ENCODE measurements at regions of chr1 and their contacts with region 1.

Region 1: DNA sequence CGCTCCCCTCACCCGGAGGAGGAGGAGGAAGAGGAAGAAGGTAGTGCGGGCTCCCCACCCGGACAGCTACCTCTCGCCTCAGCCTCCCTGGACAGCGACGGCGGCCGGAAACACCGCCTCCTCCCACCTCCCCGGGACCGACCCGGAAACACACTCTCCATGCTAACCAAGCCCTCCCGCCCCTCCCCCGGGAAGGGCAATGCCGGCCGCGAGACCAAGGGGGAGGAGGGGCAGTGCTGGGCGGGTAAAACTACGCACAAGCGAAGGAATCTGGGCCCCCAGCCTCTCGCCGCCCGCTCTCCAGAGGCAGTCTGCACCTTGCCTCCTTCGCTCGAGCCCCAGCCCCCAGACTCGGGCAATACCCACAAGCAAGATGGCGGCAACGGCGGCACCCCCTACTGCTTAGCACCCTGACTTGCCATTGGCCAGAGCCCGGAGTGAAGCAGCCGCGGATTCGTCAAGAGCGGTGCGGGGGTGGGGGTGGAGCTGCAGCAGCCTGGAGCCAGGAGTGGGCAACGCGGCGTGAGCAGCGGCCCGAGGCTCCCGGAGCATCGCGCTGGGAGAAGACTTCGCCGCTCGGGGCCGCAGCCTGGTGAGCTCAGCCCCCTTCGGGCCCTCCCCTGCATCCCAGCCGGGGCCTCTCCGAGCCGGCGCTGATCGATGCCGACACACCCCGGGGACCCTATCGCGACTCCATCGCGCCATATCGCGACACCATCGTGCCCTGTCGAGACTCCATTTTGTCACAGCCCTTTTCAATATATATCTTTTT is at the starts of genes KIAA0319L and NCDN:
- DNase-seq: peak; percentile 99
- ATAC-seq: peak; percentile 92
- H3K4me3 Mint-ChIP-seq: peak within 1 kb of the TSS; percentile 98
- H3K27ac Mint-ChIP-seq: peak within 1 kb of the TSS; percentile 97
- H3K4me1 Mint-ChIP-seq: peaks cover 45% of the 10 kb centered on the region
- H3K27me3 Mint-ChIP-seq: no peaks in the 10 kb centered on the region
- total RNA-seq, gene KIAA0319L: 26.5 to 28.1 TPM
- total RNA-seq, gene NCDN: 21.1 to 23.4 TPM

Region 2: DNA sequence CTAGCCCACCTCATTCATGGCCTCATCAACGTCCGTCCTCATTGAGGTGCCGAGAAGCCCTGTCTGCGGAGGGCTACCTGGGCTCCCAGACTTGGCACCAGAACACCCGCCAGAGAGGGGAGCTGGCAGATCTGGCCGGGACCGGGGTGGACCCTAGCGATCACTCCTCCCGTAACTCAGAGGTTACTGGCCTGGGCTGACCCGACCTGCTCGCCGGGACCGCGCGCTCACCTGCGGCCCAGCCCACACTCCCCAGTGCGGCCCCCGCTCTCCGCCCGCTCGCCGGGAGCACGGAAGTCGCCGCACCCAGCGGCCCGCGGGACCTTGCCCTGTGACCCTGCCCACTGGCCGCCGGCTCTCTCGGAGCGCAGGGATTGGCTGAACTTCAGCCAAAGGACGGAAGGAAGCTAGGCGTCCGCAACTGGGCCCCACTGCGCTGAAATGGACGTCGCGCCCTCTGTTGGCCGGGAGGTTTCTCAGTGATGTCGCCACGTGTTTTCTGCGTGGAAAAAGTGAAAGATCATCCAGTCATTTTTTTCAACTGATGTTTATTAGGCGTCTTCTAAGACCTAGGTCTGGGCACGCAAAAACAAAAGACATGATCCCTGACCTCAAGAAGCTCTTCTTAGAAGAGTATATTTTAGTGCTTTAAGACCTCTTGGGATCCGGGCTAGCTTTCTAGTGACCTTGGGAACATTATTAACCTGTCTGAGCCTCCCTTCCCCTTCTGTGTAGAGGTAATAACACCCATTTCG is 697.9 kb before region 1 on chr1 and contains the start of gene SMIM12:
- CTCF ChIA-PET with region 1: interaction called, 3 read pairs
- POLR2A ChIA-PET with region 1: no interaction called
- intact Hi-C with region 1: loop called in 1 of 2 experiments (anchors 1 kb)
- DNase-seq: peak; percentile 95
- ATAC-seq: peak; percentile 95
- H3K4me3 Mint-ChIP-seq: peak within 1 kb of the TSS; percentile 98
- H3K27ac Mint-ChIP-seq: peak within 1 kb of the TSS; percentile 99
- H3K4me1 Mint-ChIP-seq: peaks cover 51% of the 10 kb centered on the region
- H3K27me3 Mint-ChIP-seq: no peaks in the 10 kb centered on the region
- total RNA-seq, gene SMIM12: 42.4 to 45.0 TPM

Region 3: DNA sequence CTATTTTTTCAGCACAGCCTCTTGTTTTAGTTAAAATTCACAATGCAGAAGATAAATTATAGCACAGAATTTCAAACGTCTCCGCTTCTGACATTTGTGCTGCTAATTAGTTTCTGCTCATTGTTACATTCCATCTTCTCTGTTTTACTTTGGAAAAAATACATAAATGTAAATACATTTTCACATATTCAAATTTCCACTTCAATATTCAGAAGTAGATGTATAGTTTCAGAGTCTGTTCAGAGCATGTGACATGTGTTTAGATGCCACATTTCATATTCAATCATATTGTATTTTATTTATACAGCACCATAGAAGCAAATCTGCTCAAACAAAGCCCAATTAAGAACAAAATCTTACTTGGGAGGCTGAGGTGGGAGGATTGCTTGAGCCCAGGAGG is 591.9 kb before region 1 on chr1:
- CTCF ChIA-PET with region 1: no interaction called
- POLR2A ChIA-PET with region 1: no interaction called
- intact Hi-C with region 1: no loop called
- DNase-seq: no peak
- ATAC-seq: no peak
- H3K4me3 Mint-ChIP-seq: no peak overlapping the region
- H3K27ac Mint-ChIP-seq: no peak overlapping the region
- H3K4me1 Mint-ChIP-seq: peaks cover 3% of the 10 kb centered on the region
- H3K27me3 Mint-ChIP-seq: no peaks in the 10 kb centered on the region

Region 4: GRCh38 chr1:35079003-35079930 is 478.2 kb before region 1 on chr1 and contains the start of gene ZMYM1:
- CTCF ChIA-PET with region 1: no interaction called
- POLR2A ChIA-PET with region 1: no interaction called
- intact Hi-C with region 1: loop called in 1 of 2 experiments (anchors 1 kb)
- DNase-seq: peak; percentile 95
- ATAC-seq: peak; percentile 97
- H3K4me3 Mint-ChIP-seq: peak within 1 kb of the TSS; percentile 88
- H3K27ac Mint-ChIP-seq: peak within 1 kb of the TSS; percentile 97
- H3K4me1 Mint-ChIP-seq: peaks cover 36% of the 10 kb centered on the region
- H3K27me3 Mint-ChIP-seq: peaks cover 5% of the 10 kb centered on the region
- total RNA-seq, gene ZMYM1: 3.3 to 5.7 TPM

Region 5: DNA sequence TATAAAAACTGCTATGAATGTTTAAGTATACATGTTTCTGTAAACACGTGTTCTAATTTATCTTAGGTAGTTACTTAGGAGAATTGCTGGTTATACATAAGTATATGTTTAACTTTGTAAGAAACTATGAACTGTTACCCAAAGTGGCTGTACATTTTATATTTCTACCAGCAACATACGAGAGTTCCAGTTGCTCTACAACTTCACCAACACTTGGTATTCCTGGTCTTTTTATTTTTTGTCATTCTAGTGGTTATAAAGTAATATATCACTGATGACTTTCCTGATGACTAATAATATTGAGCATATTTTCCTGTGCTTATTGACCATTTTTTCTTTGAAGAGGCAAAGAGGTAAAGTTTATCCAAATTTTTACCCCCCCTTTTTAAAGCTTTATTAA is 76.2 kb before region 1 on chr1:
- CTCF ChIA-PET with region 1: no interaction called
- POLR2A ChIA-PET with region 1: no interaction called
- intact Hi-C with region 1: no loop called
- DNase-seq: no peak
- ATAC-seq: no peak
- H3K4me3 Mint-ChIP-seq: no peak overlapping the region
- H3K27ac Mint-ChIP-seq: no peak overlapping the region
- H3K4me1 Mint-ChIP-seq: no peaks in the 10 kb centered on the region
- H3K27me3 Mint-ChIP-seq: no peaks in the 10 kb centered on the region

Region 6: DNA sequence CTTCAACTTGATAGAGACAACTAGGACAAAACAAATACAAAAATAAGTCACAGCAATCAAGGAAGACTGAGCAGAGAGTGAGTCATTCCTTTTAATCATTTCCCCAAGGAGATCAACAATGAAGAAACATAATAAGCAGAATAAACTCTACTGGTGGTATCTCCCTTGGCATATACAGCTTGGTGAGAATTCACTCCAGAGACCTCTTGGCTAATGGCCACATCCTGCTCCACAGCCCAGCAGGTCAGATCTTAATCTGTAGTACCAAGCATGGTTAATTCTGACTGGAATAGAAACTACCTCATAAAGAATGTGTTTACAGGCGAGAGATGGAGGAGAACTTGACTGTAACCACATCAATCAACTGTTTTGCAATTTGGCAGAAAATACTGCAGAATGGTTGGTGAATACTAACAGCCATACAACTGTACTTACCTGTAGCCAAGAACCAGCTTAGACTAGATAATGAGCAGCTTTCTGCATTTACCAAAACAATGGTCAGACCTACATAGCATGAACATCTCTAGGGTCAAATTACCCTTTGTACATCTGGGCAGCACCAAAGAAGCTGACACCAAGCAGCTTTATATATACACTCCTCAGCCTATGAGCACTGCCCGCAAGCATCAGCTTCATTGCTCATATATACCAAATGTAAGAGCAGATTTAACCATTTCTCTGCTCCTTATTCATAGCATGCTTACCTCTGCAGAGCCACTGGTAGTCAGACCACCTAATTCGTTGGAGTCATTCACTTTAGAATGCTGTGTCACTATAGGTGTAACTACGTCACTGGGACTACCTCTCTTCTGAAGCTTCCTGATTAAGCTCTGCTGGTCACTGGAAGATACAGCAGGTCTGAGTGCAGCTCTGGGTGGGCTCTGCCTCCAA is 51.3 kb before region 1 on chr1:
- CTCF ChIA-PET with region 1: interaction called, 3 read pairs
- POLR2A ChIA-PET with region 1: interaction called, 5 read pairs
- intact Hi-C with region 1: loop called (anchors 1 to 5 kb)
- DNase-seq: peak; percentile 62
- ATAC-seq: peak; percentile 80
- H3K4me3 Mint-ChIP-seq: peak overlapping the region; percentile 26
- H3K27ac Mint-ChIP-seq: peak overlapping the region; percentile 81
- H3K4me1 Mint-ChIP-seq: peaks cover 61% of the 10 kb centered on the region
- H3K27me3 Mint-ChIP-seq: no peaks in the 10 kb centered on the region

Region 7: DNA sequence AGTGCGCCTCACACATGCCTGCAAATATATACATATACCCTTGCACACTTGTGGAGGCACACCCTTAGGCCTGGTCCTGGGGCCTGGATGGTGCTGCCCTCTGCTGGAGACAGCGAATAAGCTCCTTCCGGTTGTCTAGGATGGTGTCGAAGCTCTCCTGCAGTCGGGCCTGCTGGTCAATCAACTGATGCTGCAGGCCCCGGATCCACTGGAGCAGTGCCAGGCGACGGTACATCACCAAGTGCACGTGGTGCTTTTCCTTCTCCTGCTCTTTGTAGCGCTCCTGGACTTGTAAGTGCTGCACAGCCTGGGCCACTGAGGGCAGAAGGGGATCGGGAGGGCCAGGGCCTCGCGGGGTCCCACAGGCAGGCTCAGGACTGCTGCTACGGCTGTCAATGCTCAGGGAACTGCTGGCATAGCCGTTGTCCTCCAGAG is 158.1 kb after region 1 on chr1:
- CTCF ChIA-PET with region 1: interaction called, 14 read pairs
- POLR2A ChIA-PET with region 1: interaction called, 3 read pairs
- intact Hi-C with region 1: loop called in 1 of 2 experiments (anchors 1 kb)
- DNase-seq: peak; percentile 90
- ATAC-seq: peak; percentile 61
- H3K4me3 Mint-ChIP-seq: peak overlapping the region; percentile 37
- H3K27ac Mint-ChIP-seq: no peak overlapping the region
- H3K4me1 Mint-ChIP-seq: peaks cover 31% of the 10 kb centered on the region
- H3K27me3 Mint-ChIP-seq: no peaks in the 10 kb centered on the region

Region 8: DNA sequence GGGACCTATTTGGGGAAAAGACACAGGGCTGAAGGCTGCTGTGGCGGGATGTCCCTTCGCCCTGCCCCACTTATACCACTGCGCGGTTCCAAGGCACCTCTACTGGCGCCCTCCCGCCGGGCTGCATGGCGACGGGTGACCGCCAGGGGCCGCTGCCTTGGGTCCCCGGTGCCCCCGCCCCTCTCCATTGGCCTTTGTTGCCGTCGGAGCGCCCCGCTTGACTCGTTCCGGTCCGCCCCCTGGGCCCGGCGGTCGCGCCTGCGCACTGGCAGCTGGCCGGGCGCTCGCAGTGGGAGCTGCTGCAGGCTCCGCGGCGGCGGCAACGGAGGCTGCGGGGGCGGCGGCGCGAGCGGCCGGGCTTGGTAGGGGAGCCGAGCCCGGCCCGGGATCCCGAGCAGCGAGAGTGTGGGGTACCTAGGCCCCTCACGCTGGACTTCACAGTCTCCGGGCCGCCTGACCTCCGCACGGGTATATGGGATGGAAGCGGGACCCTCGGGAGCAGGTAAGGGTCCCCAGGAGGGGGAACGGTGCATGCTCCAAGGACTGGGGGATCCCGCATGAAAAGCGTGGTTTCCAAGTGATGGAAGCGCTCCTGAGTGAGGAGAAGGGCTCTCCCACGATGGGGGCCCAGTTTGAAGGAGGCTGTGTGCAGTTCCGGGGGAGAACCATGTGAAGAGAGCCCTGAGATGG is 325.6 kb after region 1 on chr1 and contains the start of gene AGO1:
- CTCF ChIA-PET with region 1: no interaction called
- POLR2A ChIA-PET with region 1: no interaction called
- intact Hi-C with region 1: loop called in 1 of 2 experiments (anchors 1 kb)
- DNase-seq: peak; percentile 98
- ATAC-seq: peak; percentile 95
- H3K4me3 Mint-ChIP-seq: peak within 1 kb of the TSS; percentile 91
- H3K27ac Mint-ChIP-seq: peak within 1 kb of the TSS; percentile 73
- H3K4me1 Mint-ChIP-seq: peaks cover 46% of the 10 kb centered on the region
- H3K27me3 Mint-ChIP-seq: no peaks in the 10 kb centered on the region
- total RNA-seq, gene AGO1: 31.5 to 34.6 TPM

Region 9: DNA sequence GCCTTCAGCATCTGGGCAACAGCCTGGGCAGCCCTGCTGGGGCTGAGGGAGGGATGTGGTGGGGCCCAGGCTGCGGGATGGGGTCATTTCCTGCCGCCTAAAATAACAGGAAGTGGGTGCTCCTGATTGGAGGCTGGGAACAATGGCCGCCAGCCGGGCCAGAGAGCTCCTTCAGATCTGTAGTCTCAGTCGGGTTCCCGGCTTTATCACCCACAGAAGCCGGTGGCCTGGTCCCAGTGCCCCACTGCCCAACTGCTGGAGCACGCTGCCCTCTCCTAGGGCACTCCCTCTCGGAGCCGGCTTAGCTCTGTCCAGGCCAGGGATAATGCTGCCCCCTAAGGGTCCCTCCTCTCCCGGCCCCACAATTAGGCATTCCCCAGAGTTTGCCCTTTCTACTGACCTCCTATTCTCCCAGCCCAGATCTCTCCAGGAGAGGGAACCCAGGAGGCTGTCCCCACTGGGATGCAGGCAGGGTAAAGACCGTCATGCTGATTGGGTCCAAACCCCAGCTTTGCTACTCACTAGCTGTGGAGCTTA is 603.5 kb after region 1 on chr1:
- CTCF ChIA-PET with region 1: no interaction called
- POLR2A ChIA-PET with region 1: no interaction called
- intact Hi-C with region 1: no loop called
- DNase-seq: peak; percentile 86
- ATAC-seq: peak; percentile 59
- H3K4me3 Mint-ChIP-seq: peak overlapping the region; percentile 76
- H3K27ac Mint-ChIP-seq: peak overlapping the region; percentile 94
- H3K4me1 Mint-ChIP-seq: peaks cover 62% of the 10 kb centered on the region
- H3K27me3 Mint-ChIP-seq: no peaks in the 10 kb centered on the region

Measured in activated CD4-positive, alpha-beta T cell treated with anti-CD3 and anti-CD28 coated beads for 36 hours (primary cell).